ENCODE measurements at regions of chr3 and their contacts with region 1.

Region 1: GRCh38 chr3:56342475-56342874 is 125.8 kb downstream of the ERC2 start:
- DNase-seq: no peak
- H3K4me3 ChIP-seq: no peak overlapping the region
- H3K4me1 ChIP-seq: peaks cover 7% of the 10 kb centered on the region; the same call in 1 of the 2 replicates
- H3K27me3 ChIP-seq: no peaks in the 10 kb centered on the region

Region 2: GRCh38 chr3:55746808-55747413 is 595.6 kb before region 1 on chr3:
- in situ Hi-C with region 1: no loop called
- DNase-seq: peak in 1 of 2 experiments; percentile 22
- H3K4me3 ChIP-seq: no peak overlapping the region
- H3K4me1 ChIP-seq: peaks cover 7% of the 10 kb centered on the region
- H3K27me3 ChIP-seq: no peaks in the 10 kb centered on the region

Region 3: DNA sequence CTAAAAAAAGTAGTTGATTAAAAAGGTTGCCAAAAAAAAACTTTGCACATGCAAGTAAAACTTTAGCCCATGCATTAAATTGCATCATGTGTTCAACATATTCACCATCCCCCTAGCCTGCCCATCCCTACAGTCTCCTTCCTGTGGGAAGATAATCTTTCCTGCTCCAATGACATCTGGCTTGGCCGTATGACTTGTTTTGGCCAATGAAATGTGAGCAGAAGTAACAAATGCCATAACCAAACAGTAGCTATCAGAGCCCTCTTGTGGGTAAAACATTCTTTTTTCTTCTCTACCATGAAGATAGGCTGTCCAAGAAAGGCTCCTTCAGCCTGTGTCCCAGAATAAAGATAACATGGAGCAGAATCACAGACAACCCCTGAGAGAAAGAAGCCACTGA is 110.5 kb after region 1 on chr3:
- in situ Hi-C with region 1: loop called (anchors 5 kb)
- DNase-seq: no peak
- H3K4me3 ChIP-seq: no peak overlapping the region
- H3K4me1 ChIP-seq: 0 out of 2 replicates have a peak, but pooled peaks cover 2% of the 10 kb centered on the region
- H3K27me3 ChIP-seq: no peaks in the 10 kb centered on the region

Region 4: GRCh38 chr3:57068437-57069089 is 726.1 kb after region 1 on chr3:
- in situ Hi-C with region 1: no loop called
- DNase-seq: peak; percentile 84 to 89
- H3K4me3 ChIP-seq: no peak overlapping the region
- H3K4me1 ChIP-seq: peaks cover 15% of the 10 kb centered on the region
- H3K27me3 ChIP-seq: no peaks in the 10 kb centered on the region

Measured in HAP-1 (cell line).